BJ (cell line): ENCODE measurements at regions of chr11 and their contacts with region 1.

Region 1: GRCh38 chr11:58675334-58676155 is 53.1 kb downstream of the CNTF start:
- DNase-seq: no peak
- H3K4me3 ChIP-seq: no peak overlapping the region
- H3K27me3 ChIP-seq: 0 out of 2 replicates have a peak, but pooled peaks cover 5% of the 10 kb centered on the region
- CTCF ChIP-seq: peak; percentile 99

Region 2: GRCh38 chr11:58292017-58292416 is 383.5 kb before region 1 on chr11:
- CTCF ChIA-PET with region 1: no interaction called
- POLR2A ChIA-PET with region 1: no interaction called
- DNase-seq: no peak
- H3K4me3 ChIP-seq: no peak overlapping the region
- H3K27me3 ChIP-seq: no peaks in the 10 kb centered on the region
- CTCF ChIP-seq: no peak

Region 3: GRCh38 chr11:58616594-58616993 is 59.0 kb before region 1 on chr11:
- CTCF ChIA-PET with region 1: no interaction called
- POLR2A ChIA-PET with region 1: no interaction called
- DNase-seq: peak; percentile 71
- H3K4me3 ChIP-seq: no peak overlapping the region
- H3K27me3 ChIP-seq: no peaks in the 10 kb centered on the region
- CTCF ChIP-seq: no peak

Region 4: GRCh38 chr11:58659404-58659803 is 16.1 kb before region 1 on chr11:
- CTCF ChIA-PET with region 1: interaction called, 11 read pairs
- POLR2A ChIA-PET with region 1: no interaction called
- DNase-seq: no peak
- H3K4me3 ChIP-seq: no peak overlapping the region
- H3K27me3 ChIP-seq: no peaks in the 10 kb centered on the region
- CTCF ChIP-seq: no peak

Region 5: GRCh38 chr11:58688789-58689503 is 13.4 kb after region 1 on chr11:
- CTCF ChIA-PET with region 1: interaction called, 29 read pairs
- POLR2A ChIA-PET with region 1: no interaction called
- DNase-seq: no peak
- H3K4me3 ChIP-seq: no peak overlapping the region
- H3K27me3 ChIP-seq: no peaks in the 10 kb centered on the region
- CTCF ChIP-seq: no peak